Astrocyte of the cerebellum (primary cell): ENCODE measurements at regions of chrX and their contacts with region 1.

Region 1: GRCh38 chrX:2819345-2820135 is 9.2 kb upstream of the GYG2 start:
- DNase-seq: no peak
- H3K4me3 ChIP-seq: no peak overlapping the region
- CTCF ChIP-seq: peak; percentile 39

Region 2: GRCh38 chrX:2690856-2691542 is 128.5 kb before region 1 on chrX and contains the start of gene CD99:
- in situ Hi-C with region 1: loop called (anchors 25 kb)
- DNase-seq: no peak
- H3K4me3 ChIP-seq: peak within 1 kb of the TSS; percentile 86
- CTCF ChIP-seq: no peak

Region 3: GRCh38 chrX:2793752-2794151 is 25.8 kb before region 1 on chrX:
- in situ Hi-C with region 1: no loop called
- DNase-seq: no peak
- H3K4me3 ChIP-seq: no peak overlapping the region
- CTCF ChIP-seq: no peak